ENCODE measurements at regions of chr1 and their contacts with region 1.

Region 1: GRCh38 chr1:171715813-171716251 is 26.0 kb downstream of the VAMP4 start:
- DNase-seq: peak; percentile 60
- H3K4me3 ChIP-seq: no peak overlapping the region
- H3K27ac ChIP-seq: no peak overlapping the region
- H3K4me1 ChIP-seq: peaks cover 8% of the 10 kb centered on the region
- H3K27me3 ChIP-seq: no peaks in the 10 kb centered on the region
- CTCF ChIP-seq: peak; percentile 24 to 35
- POLR2A ChIP-seq: no peak

Region 2: GRCh38 chr1:171485375-171486047 is 230.3 kb before region 1 on chr1 and contains the start of gene PRRC2C:
- CTCF ChIA-PET with region 1: no interaction called
- POLR2A ChIA-PET with region 1: no interaction called
- dilution Hi-C with region 1: no loop called
- intact Hi-C with region 1: loop called (anchors 10 kb)
- DNase-seq: peak; percentile 98
- H3K4me3 ChIP-seq: peak within 1 kb of the TSS; percentile 85 to 92 (median 90)
- H3K27ac ChIP-seq: peak within 1 kb of the TSS; percentile 94
- H3K4me1 ChIP-seq: peaks cover 22% of the 10 kb centered on the region
- H3K27me3 ChIP-seq: no peaks in the 10 kb centered on the region
- CTCF ChIP-seq: peak; percentile 64 to 71
- POLR2A ChIP-seq: peak; percentile 75
- total RNA-seq, gene PRRC2C: 164 and 199 TPM in 2 replicates

Region 3: GRCh38 chr1:171644805-171645483 is 70.9 kb before region 1 on chr1:
- CTCF ChIA-PET with region 1: interaction called, 188 read pairs
- POLR2A ChIA-PET with region 1: no interaction called
- dilution Hi-C with region 1: no loop called
- intact Hi-C with region 1: loop called (anchors 1 kb)
- DNase-seq: peak; percentile 86
- H3K4me3 ChIP-seq: no peak overlapping the region
- H3K27ac ChIP-seq: no peak overlapping the region
- H3K4me1 ChIP-seq: no peaks in the 10 kb centered on the region
- H3K27me3 ChIP-seq: peaks cover 0 to 2% of the 10 kb centered on the region in 2 experiments
- CTCF ChIP-seq: peak; percentile 78 to 86
- POLR2A ChIP-seq: no peak

Region 4: DNA sequence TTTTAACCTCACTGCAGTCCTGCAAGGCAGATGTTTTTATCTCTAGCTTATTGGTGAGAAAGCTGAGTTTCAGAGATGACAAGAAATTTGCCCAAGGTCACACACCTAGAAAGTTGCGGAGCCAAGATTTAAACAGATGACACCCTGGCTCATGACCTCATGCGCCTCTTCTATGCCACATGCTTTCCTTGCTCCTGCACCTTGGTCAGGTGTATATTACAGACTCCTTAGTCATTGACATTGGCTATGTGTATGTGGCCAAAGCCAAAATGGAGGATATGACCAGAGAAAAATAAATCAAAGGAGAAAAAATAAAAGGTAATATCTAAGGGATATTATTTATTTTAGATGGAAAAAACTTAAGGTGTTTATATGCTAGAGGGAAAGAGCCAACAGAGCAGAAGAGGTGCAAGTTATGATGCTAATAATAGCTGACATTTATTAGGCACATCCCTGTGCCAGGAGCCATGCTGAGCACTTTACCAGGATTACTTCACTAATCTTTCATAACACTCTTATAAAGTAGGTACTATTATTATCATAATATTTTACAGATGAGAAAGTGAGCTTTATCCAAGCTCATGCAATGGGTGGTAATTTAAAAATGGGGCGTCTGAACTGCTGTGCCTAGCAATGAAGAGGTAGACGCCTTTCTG is 49.6 kb before region 1 on chr1:
- CTCF ChIA-PET with region 1: interaction called, 13 read pairs
- POLR2A ChIA-PET with region 1: no interaction called
- dilution Hi-C with region 1: no loop called
- intact Hi-C with region 1: no loop called
- DNase-seq: no peak
- H3K4me3 ChIP-seq: no peak overlapping the region
- H3K27ac ChIP-seq: no peak overlapping the region
- H3K4me1 ChIP-seq: no peaks in the 10 kb centered on the region
- H3K27me3 ChIP-seq: peaks cover 0 to 1% of the 10 kb centered on the region in 2 experiments
- CTCF ChIP-seq: no peak
- POLR2A ChIP-seq: no peak

Region 5: DNA sequence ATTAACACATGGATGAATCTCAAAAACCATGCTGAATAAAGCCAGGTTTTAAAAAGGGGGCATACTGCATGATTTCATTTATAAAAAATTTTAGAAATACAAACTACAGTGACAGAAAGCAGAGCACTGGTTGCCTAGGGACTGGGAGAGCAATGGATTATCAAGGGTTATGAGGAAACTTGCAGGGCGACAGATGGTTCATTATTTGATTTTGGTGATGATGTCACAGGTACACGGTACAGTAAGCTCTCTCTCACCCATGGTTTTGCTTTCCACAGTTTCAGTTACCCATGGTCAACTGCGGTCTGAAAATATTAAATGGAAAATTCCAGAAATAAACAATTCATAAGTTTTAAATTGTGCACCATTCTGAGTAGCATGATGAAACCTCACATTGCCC is 11.9 kb after region 1 on chr1:
- CTCF ChIA-PET with region 1: interaction called, 28 read pairs
- POLR2A ChIA-PET with region 1: no interaction called
- dilution Hi-C with region 1: no loop called
- intact Hi-C with region 1: no loop called
- DNase-seq: no peak
- H3K4me3 ChIP-seq: no peak overlapping the region
- H3K27ac ChIP-seq: no peak overlapping the region
- H3K4me1 ChIP-seq: peaks cover 6% of the 10 kb centered on the region
- H3K27me3 ChIP-seq: no peaks in the 10 kb centered on the region
- CTCF ChIP-seq: no peak
- POLR2A ChIP-seq: no peak

Region 6: DNA sequence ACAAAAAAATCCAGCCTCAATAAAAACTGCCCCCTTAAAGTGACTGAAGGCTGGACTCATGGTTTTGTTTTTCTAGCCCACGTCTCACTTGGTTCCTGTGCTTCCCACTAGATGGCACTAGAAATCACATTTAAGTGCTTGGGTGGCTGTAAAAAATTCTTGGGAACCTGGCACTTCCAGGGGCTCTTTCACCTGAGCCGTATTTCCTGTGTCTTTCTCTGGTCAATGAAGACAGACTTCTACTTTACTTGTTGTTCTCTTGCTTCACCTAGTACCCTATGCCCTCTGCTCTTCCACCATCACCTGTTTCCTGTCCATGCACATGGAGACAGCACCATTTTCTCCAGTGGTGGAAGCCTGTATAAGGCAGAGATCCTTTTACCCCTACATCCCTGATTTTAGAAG is 85.7 kb after region 1 on chr1:
- CTCF ChIA-PET with region 1: interaction called, 12 read pairs
- POLR2A ChIA-PET with region 1: no interaction called
- dilution Hi-C with region 1: no loop called
- intact Hi-C with region 1: no loop called
- DNase-seq: peak; percentile 51
- H3K4me3 ChIP-seq: no peak overlapping the region
- H3K27ac ChIP-seq: no peak overlapping the region
- H3K4me1 ChIP-seq: no peaks in the 10 kb centered on the region
- H3K27me3 ChIP-seq: no peaks in the 10 kb centered on the region
- CTCF ChIP-seq: peak; percentile 69 to 75
- POLR2A ChIP-seq: no peak

Measured in endothelial cell of umbilical vein (primary cell).